Right cardiac atrium (tissue), 5 donors: ENCODE measurements at regions of chr1 and their contacts with region 1.

Region 1: DNA sequence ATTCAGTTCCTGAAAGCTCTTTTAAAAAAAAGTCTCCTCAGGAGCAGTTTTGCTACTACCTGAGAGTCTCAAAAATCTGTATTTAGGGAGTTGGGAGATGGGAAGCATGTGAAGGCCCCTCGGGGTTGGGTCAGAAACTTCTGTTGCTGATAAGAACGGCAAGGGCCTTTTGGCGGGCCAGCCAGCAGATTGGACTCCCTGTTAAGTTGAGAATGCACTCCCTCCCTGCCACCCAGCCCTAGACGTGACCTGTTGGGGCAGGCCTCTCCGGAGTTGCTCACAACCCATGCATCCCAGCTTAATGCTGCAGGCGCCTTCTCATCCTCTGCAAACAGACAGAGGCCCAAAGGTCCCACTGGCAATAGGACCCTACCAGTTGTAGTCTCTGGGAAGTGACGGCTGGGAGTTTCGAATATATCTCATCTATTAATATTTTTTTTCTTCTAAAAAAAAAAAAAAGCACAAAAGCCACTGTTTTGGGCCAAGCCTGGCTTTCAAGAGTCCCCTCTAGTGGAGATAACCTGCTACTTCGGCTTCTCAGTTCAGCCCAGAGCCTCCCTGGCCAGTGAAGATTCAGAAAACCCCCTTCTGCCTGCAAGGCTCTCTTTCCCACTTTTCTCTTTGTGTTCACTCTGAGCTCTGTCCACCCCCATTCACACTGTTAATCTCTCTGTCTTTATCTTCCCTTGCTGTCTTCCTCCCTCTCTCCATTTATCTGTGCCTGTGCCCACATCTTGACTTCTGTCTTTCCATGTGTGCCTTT is 5.3 kb downstream of the PLXNA2 start:
- DNase-seq: peak in 1 of 3 donors; percentile 73
- ATAC-seq: peak; percentile 24 to 43
- H3K4me3 ChIP-seq: no peak overlapping the region
- H3K27ac ChIP-seq: no peak overlapping the region
- H3K4me1 ChIP-seq: peaks cover 32% of the 10 kb centered on the region
- H3K27me3 ChIP-seq: no peaks in the 10 kb centered on the region

Region 2: GRCh38 chr1:208203127-208203847 is 35.6 kb before region 1 on chr1:
- intact Hi-C with region 1: loop called in 1 of 4 experiments (anchors 5 kb)
- DNase-seq: peak; percentile 66 to 89 (median 87)
- ATAC-seq: peak; percentile 50 to 72
- H3K4me3 ChIP-seq: no peak overlapping the region
- H3K27ac ChIP-seq: peak overlapping the region; percentile 92
- H3K4me1 ChIP-seq: peaks cover 30% of the 10 kb centered on the region
- H3K27me3 ChIP-seq: no peaks in the 10 kb centered on the region